Gastrocnemius medialis (tissue), 4 donors: ENCODE measurements at regions of chr2 and their contacts with region 1.

Region 1: DNA sequence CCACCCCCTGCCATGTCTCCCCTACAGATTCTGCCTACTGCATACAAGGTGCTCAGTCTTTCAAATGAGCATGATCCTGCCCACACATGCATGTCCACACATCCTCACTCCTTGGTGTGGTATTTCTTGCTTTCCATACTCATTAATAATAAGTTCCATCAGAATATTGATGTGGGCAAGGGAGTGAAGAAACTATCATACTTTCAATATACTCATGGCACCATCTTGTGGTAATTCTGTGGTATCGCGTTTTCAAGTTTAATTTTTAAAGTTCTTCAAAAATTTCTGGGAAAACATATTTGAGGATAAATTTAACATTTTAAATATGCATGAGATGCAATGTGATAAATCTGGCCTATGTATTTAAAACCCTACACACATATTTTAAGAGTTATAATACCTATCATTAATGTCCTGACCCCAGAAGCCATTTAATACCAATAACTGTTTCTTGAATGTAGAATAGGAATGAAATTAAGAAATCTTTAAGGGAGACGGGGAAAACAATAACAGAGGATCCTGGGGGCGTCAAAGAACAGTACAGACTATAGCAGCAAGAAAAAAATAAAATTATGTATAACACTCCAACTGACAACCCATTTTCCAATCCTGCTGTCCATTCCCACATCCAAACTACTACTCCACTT is 110.1 kb downstream of the ZNF385B start:
- DNase-seq: no peak
- ATAC-seq: peak; percentile 30 to 55
- H3K4me3 ChIP-seq: no peak overlapping the region
- H3K27ac ChIP-seq: no peak overlapping the region
- H3K4me1 ChIP-seq: peaks cover 0 to 9% of the 10 kb centered on the region in 2 donors
- H3K27me3 ChIP-seq: no peaks in the 10 kb centered on the region
- CTCF ChIP-seq: peak; percentile 61 to 72 (median 64)
- POLR2A ChIP-seq: no peak

Region 2: GRCh38 chr2:179226203-179226960 is 524.9 kb before region 1 on chr2:
- in situ Hi-C with region 1: loop called in 1 of 4 experiments (anchors 25 kb)
- intact Hi-C with region 1: loop called (anchors 10 kb)
- DNase-seq: no peak
- ATAC-seq: no peak
- H3K4me3 ChIP-seq: no peak overlapping the region
- H3K27ac ChIP-seq: no peak overlapping the region
- H3K4me1 ChIP-seq: peaks cover 19 to 31% of the 10 kb centered on the region in 2 donors
- H3K27me3 ChIP-seq: no peaks in the 10 kb centered on the region
- CTCF ChIP-seq: no peak
- POLR2A ChIP-seq: no peak

Region 3: GRCh38 chr2:179239195-179239594 is 512.1 kb before region 1 on chr2:
- in situ Hi-C with region 1: loop called in 1 of 4 experiments (anchors 25 kb)
- intact Hi-C with region 1: no loop called
- DNase-seq: no peak
- ATAC-seq: no peak
- H3K4me3 ChIP-seq: no peak overlapping the region
- H3K27ac ChIP-seq: no peak overlapping the region
- H3K4me1 ChIP-seq: peaks cover 40 to 54% of the 10 kb centered on the region in 2 donors
- H3K27me3 ChIP-seq: no peaks in the 10 kb centered on the region
- CTCF ChIP-seq: no peak
- POLR2A ChIP-seq: no peak

Region 4: DNA sequence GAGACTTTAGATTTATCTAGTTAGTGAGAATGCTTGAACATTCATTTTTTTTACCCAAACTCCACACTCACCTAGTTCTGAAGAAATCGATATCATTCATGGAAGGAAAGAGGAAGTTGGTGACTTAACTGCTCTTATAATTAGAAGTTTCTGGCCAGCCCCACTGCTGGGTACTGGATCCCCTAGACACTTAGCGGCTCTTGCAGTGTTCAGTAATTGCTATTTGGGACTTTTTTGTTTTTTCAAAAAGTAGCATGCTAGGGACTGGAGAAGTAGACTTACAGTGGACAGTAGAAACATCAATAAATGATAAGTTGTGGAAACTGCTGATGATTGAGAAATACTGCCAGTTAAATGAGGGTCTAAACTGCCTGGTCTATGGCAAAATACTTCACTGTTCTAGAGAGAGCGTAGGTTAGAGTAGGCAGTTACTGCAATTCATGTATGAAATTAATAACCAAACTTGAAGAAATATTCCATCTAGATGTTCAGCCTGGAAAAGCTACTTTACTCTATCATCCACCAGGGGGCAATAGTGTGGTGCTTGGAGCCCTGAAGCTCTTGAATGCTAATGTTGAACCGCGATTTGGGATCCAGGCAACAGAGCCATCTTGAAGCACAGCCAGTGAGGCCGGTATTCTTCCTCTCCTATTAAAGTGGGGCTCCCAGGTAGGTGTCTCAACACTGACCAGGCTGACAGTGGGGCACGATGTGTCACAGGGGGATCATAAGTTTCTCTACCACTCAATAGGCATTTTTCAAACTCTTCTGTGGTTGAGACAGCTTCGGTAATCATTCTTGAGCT is 340.5 kb before region 1 on chr2:
- in situ Hi-C with region 1: loop called in 1 of 4 experiments (anchors 5 kb)
- intact Hi-C with region 1: loop called (anchors 1 kb)
- DNase-seq: peak in 1 of 2 donors; percentile 27
- ATAC-seq: peak; percentile 19 to 78
- H3K4me3 ChIP-seq: no peak overlapping the region
- H3K27ac ChIP-seq: no peak overlapping the region
- H3K4me1 ChIP-seq: no peaks in the 10 kb centered on the region
- H3K27me3 ChIP-seq: no peaks in the 10 kb centered on the region
- CTCF ChIP-seq: peak; percentile 38 to 73 (median 51)
- POLR2A ChIP-seq: no peak

Region 5: GRCh38 chr2:179422037-179422643 is 329.1 kb before region 1 on chr2:
- in situ Hi-C with region 1: loop called in 3 of 4 experiments (anchors 5 to 10 kb)
- intact Hi-C with region 1: loop called (anchors 1 kb)
- DNase-seq: peak; percentile 48 to 65
- ATAC-seq: peak; percentile 54 to 81
- H3K4me3 ChIP-seq: no peak overlapping the region
- H3K27ac ChIP-seq: no peak overlapping the region
- H3K4me1 ChIP-seq: no peaks in the 10 kb centered on the region
- H3K27me3 ChIP-seq: no peaks in the 10 kb centered on the region
- CTCF ChIP-seq: peak; percentile 45 to 75 (median 71)
- POLR2A ChIP-seq: no peak

Region 6: DNA sequence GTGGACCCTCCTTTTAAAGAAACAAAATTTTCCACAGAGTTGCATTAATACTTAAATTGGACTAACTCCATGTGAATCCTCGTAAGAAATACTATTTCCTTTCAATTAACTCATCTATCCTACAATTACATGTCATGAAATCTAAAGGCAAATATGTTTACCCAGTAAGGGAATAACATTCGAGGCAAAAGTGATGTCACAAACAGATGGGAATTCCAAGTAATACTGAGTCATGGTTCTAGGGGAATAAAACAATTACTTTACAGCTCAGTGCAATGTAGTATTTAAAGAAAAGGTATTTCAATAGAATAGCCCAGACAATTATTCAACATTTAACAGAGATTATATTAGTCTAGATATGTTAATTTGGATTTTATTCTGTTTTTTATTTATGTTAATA is 95.7 kb before region 1 on chr2:
- in situ Hi-C with region 1: no loop called
- intact Hi-C with region 1: no loop called
- DNase-seq: no peak
- ATAC-seq: no peak
- H3K4me3 ChIP-seq: no peak overlapping the region
- H3K27ac ChIP-seq: no peak overlapping the region
- H3K4me1 ChIP-seq: peaks cover 0 to 4% of the 10 kb centered on the region in 2 donors
- H3K27me3 ChIP-seq: no peaks in the 10 kb centered on the region
- CTCF ChIP-seq: no peak
- POLR2A ChIP-seq: no peak

Region 7: GRCh38 chr2:180907731-180908130 is 1156.4 kb after region 1 on chr2:
- in situ Hi-C with region 1: no loop called
- intact Hi-C with region 1: no loop called
- DNase-seq: no peak
- ATAC-seq: no peak
- H3K4me3 ChIP-seq: no peak overlapping the region
- H3K27ac ChIP-seq: no peak overlapping the region
- H3K4me1 ChIP-seq: no peaks in the 10 kb centered on the region
- H3K27me3 ChIP-seq: no peaks in the 10 kb centered on the region
- CTCF ChIP-seq: no peak
- POLR2A ChIP-seq: no peak